ENCODE measurements at regions of chr7 and their contacts with region 1.

Region 1: DNA sequence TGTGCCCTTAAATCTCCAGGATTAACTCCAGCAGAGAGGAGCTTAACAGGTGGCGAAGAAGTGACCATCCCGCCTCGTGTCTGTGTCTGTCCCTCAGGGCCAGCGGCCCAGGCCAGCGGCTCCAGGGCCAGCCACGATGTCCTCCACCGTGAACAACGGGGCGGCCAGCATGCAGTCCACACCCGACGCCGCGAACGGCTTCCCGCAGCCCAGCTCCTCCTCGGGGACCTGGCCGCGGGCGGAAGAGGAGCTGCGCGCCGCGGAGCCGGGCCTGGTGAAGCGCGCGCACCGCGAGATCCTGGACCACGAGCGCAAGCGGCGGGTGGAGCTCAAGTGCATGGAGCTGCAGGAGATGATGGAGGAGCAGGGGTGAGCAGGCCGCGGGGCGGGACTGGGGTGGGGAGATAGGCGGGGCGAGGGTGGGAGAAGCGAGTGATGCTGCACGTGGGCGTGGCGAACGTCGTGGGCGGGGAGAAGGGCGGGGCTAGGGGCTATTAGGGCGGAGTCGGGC is 33.3 kb downstream of the SRRM3 start:
- DNase-seq: peak; percentile 98
- ATAC-seq: peak; percentile 86
- H3K4me3 Mint-ChIP-seq: peak overlapping the region; percentile 70
- H3K27ac Mint-ChIP-seq: peak overlapping the region; percentile 89; the same call in 1 of the 2 replicates
- H3K4me1 Mint-ChIP-seq: peaks cover 69% of the 10 kb centered on the region
- H3K27me3 Mint-ChIP-seq: no peaks in the 10 kb centered on the region; the same call in none of the 2 replicates
- CTCF ChIP-seq: no peak

Region 2: GRCh38 chr7:76193883-76194282 is 41.1 kb before region 1 on chr7:
- CTCF ChIA-PET with region 1: interaction called, 38 read pairs
- POLR2A ChIA-PET with region 1: interaction called, 5 read pairs
- DNase-seq: no peak
- ATAC-seq: no peak
- H3K4me3 Mint-ChIP-seq: no peak overlapping the region
- H3K27ac Mint-ChIP-seq: peak overlapping the region; percentile 14; the same call in 1 of the 2 replicates
- H3K4me1 Mint-ChIP-seq: peaks cover 33% of the 10 kb centered on the region
- H3K27me3 Mint-ChIP-seq: no peaks in the 10 kb centered on the region; the same call in 1 of the 2 replicates
- CTCF ChIP-seq: no peak

Region 3: DNA sequence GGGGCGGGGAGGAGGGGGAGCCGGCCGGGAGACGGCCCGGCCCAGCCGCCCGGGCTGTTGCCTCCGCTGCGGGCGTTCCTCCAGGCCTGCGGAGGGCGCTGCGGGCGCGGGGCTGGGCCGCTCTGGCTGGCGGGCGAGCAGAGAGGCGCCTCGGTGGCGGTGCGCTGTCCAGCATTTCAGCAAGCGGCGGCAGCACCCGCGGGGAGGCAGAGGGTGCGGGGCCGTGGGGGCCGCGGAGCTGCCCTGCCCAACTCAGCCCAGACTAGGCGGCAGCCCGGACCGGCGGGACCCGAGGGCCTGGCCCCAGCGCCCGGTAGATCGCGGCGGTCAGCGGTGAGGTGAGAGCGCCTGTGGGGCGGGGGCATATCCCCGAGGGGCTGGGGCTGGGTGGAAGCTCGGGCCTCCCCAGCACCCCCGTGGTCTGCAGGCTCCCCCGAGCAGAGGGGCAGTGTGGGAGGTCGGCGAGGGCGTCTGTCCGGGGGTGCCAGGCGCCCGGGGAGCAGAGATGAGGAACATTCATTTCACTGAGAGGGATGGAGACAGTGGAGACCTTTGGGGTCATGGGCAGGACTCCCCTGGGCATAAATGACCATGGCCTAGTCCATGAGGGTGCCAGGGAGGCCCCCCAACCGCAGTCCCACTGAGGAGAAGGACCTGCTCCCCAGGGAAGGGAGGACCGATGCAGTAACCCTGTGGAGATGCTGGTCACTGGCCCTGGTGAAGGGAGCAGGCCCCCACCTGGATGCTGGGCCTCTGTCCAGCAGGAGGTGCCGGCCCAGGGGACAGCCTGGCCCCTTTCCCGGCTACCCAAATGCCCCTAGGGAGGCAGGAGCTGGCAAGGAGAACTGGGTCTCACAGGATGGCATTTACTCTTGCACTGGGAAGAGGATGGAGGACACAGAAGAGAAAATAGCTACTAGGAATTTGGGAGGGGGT is 33.0 kb before region 1 on chr7 and contains the start of gene SRRM3:
- CTCF ChIA-PET with region 1: interaction called, 38 read pairs
- POLR2A ChIA-PET with region 1: interaction called, 5 read pairs
- DNase-seq: peak; percentile 91
- ATAC-seq: peak; percentile 73
- H3K4me3 Mint-ChIP-seq: peak within 1 kb of the TSS; percentile 66
- H3K27ac Mint-ChIP-seq: no peak within 1 kb of the TSS
- H3K4me1 Mint-ChIP-seq: peaks cover 31% of the 10 kb centered on the region
- H3K27me3 Mint-ChIP-seq: peaks cover 22% of the 10 kb centered on the region
- CTCF ChIP-seq: peak; percentile 54; the same call in 1 of the 2 replicates
- total RNA-seq, gene SRRM3: 17.7 to 24.6 TPM (median 20.7 TPM) in 3 replicates

Region 4: DNA sequence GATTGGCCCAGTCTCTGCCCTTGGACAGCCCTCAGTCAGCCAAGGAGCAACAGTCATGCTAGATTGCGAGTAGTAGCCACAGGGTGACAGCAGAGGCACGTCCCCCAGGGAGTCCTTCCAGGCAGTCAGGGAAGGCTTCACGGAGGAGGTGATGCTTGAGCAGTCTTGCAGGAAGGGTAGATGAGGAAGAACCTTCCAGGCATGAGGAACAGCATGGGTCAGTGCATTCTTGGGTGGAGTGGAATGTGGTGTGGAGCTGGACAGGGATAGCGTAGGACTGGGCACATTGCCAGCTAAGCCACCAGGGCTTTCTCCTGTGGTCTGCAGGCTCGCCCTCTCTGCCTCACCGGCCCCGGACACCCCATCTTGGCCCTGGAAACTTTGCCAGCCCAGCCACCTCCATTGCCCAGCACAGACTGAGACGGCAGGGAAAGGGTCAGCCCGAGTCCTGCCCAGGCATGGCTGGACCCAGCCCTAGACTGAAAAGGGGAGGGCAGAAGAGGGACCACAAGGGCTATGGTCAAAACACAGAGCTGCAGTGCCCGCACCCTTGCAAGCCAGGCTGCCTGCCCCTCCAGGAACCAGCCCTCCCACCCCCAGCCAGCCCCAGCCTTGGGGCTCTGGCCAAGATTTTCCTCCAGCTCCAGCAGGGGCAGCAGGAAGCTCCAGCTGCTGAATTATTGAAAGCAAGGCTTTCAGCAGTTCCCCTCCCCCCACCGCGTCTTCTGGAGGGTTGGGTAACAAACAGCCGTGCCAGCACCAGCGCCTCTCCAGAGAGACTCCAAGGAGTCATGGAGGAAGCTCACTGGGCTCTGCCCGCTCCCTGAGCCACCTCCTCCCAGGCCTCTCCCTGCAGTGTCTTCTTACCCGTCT is 14.6 kb before region 1 on chr7:
- CTCF ChIA-PET with region 1: interaction called, 14 read pairs
- POLR2A ChIA-PET with region 1: interaction called, 9 read pairs
- DNase-seq: peak; percentile 84
- ATAC-seq: peak; percentile 56
- H3K4me3 Mint-ChIP-seq: no peak overlapping the region; the same call in 1 of the 2 replicates
- H3K27ac Mint-ChIP-seq: peak overlapping the region; percentile 84; the same call in 1 of the 2 replicates
- H3K4me1 Mint-ChIP-seq: peaks cover 76% of the 10 kb centered on the region
- H3K27me3 Mint-ChIP-seq: no peaks in the 10 kb centered on the region; the same call in 1 of the 2 replicates
- CTCF ChIP-seq: no peak

Measured in WTC11 (cell line).